Dorsolateral prefrontal cortex (tissue), 120 donors: ENCODE measurements at regions of chr4 and their contacts with region 1.

Region 1: DNA sequence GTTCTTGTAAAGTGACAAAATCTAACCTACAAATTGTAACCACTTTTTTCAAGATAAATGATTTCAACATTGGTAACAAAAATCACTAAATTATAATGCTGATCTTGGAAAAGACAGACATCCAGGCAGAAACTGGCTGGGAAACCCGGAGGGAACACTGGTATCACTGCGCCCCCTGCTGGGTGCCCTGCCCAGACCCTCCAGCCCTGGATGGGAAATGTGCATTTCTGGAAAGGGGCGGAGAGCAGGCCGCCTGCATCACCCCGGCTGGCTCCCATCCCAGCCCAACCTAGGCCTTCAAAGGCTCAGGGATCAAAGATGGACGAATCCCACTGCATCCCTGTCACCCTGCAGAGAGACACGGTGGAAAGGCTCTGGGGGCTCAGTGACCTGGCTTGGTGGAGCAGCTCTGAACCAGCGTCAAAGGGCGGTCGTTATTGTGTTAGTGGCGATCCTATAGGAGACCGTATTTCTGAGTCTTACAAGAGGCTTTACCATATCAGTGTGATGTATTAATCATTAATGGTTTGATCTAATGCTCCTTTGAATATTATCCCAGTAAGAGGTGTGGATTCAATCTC is 37.3 kb downstream of the ACOX3 start:
- DNase-seq: peak; percentile 42 to 90 (median 82)
- H3K4me3 ChIP-seq: no peak overlapping the region
- H3K27ac ChIP-seq: peak overlapping the region in 37 of 59 donors; percentile 1 to 80 (median 54)
- H3K27me3 ChIP-seq: no peaks in the 10 kb centered on the region
- CTCF ChIP-seq: peak; percentile 85 to 99 (median 96)

Region 2: DNA sequence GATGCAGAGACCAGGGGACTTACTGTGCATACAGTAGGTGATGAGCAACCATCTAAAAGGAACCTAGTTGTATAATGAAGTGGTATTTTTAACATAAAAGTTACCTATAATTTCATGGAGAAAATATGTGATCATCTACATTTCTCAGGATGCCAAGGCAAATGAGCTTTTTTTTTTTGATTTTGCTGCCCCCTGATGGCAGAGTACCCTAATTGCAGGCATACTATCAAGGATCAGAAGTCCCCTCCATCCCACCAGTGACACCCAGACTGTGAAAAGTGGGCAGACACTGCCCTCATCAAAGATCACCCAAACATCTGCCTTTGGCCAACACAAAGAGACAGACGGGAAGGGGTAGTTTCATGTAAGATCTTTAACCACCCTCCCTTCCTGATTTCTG is 235.0 kb before region 1 on chr4:
- intact Hi-C with region 1: loop called in 1 of 2 experiments (anchors 10 kb)
- DNase-seq: no peak
- H3K4me3 ChIP-seq: no peak overlapping the region
- H3K27ac ChIP-seq: peak overlapping the region in 2 of 59 donors; percentile 14 to 17
- H3K27me3 ChIP-seq: no peaks in the 10 kb centered on the region
- CTCF ChIP-seq: peak in 19 of 56 donors; percentile 9 to 42 (median 26)

Region 3: GRCh38 chr4:8241895-8242696 is 161.2 kb before region 1 on chr4:
- intact Hi-C with region 1: loop called (anchors 1 to 2 kb)
- DNase-seq: peak in 9 of 10 donors; percentile 67 to 89 (median 76)
- H3K4me3 ChIP-seq: no peak overlapping the region
- H3K27ac ChIP-seq: peak overlapping the region in 4 of 59 donors; percentile 9 to 46 (median 24)
- H3K27me3 ChIP-seq: no peaks in the 10 kb centered on the region
- CTCF ChIP-seq: peak; percentile 93 to 100 (median 98)

Region 4: DNA sequence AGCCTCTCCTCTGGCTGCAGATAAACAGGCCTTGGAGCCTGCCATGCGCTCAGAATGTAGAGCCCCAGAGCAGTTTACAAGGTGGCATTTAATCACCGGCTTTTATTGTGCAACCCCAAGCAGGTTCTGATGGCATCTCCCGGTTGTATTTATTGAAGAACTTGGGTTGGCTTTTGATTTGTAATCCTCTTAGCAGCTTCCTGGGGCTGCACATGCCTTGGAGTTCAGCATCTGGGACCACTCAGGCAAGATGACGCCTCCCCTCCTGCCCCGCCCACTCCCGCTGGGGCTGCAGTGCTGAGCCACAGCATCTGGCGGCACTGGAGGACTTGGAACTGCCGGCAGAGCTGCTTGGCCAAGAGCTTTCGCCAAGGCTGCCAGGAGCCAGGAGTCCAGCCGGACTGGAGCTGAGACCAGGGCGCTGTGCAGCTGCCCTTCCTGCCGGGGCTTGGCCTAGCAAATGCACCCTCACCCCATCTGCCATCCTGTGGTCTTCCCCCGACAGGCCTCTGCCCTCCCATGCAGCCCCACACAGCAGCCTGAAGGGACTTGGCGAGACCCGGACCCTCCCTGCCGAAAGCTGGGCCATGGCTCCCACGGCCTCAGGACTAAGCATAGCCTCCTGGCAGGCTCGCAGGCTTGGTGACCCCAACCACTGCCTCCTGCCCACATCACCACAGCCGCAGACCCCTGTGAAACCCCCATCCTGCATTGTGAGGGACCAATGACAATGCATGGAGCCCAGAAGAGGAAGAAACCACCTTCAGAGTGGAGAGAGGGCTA is 128.3 kb before region 1 on chr4:
- intact Hi-C with region 1: loop called (anchors 1 to 2 kb)
- DNase-seq: peak in 9 of 10 donors; percentile 50 to 80 (median 71)
- H3K4me3 ChIP-seq: no peak overlapping the region
- H3K27ac ChIP-seq: peak overlapping the region in 3 of 59 donors; percentile 0 to 18 (median 14)
- H3K27me3 ChIP-seq: peaks cover 0 to 21% (median 11%) of the 10 kb centered on the region in 45 donors
- CTCF ChIP-seq: peak in 50 of 56 donors; percentile 14 to 72 (median 51)

Region 5: GRCh38 chr4:8330821-8331574 is 72.3 kb before region 1 on chr4:
- intact Hi-C with region 1: loop called (anchors 5 kb)
- DNase-seq: peak in 9 of 10 donors; percentile 22 to 68 (median 59)
- H3K4me3 ChIP-seq: no peak overlapping the region
- H3K27ac ChIP-seq: peak overlapping the region in 1 of 59 donors; percentile 27
- H3K27me3 ChIP-seq: no peaks in the 10 kb centered on the region
- CTCF ChIP-seq: peak in 41 of 56 donors; percentile 6 to 64 (median 37)

Region 6: DNA sequence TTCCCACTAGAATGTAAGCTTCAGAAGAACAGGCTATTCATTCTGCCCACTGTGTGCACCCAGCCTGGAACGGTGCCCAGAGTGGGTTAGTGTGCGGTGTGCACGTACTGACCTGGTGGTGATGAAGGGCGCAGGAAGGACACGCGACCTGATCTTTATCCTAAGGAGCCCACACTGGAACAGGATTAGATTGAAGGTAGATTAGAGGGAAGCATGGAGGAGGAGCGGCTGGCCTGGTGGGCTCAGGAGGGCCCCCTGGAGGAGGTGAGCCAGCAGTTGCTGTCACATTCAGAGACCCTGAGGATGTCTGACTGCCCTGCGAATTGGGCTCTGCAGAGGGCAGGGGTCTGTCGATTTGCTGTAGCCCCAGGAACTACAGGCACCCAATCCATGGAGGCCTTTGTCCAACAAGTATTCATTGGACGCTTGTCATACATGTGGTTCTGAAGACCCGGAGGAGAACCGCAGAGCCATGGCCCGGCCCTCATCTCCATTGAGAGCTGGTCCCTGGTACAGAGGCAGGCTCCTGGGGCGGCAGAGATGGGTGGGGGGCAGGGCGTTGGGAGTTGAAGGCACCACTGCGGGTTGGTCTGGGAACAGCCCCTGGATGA is 60.5 kb before region 1 on chr4:
- intact Hi-C with region 1: no loop called
- DNase-seq: peak in 1 of 10 donors; percentile 20
- H3K4me3 ChIP-seq: no peak overlapping the region
- H3K27ac ChIP-seq: peak overlapping the region in 1 of 59 donors; percentile 10
- H3K27me3 ChIP-seq: no peaks in the 10 kb centered on the region
- CTCF ChIP-seq: no peak